ENCODE measurements at regions of chr4 and their contacts with region 1.

Region 1: GRCh38 chr4:25312496-25313200 is at the start of gene ZCCHC4:
- DNase-seq: peak; percentile 89
- ATAC-seq: peak; percentile 100
- H3K4me3 Mint-ChIP-seq: peak within 1 kb of the TSS; percentile 99
- H3K27ac Mint-ChIP-seq: peak within 1 kb of the TSS; percentile 94
- H3K4me1 Mint-ChIP-seq: peaks cover 28% of the 10 kb centered on the region
- H3K27me3 Mint-ChIP-seq: peaks cover 2% of the 10 kb centered on the region
- CTCF ChIP-seq: peak; percentile 93
- total RNA-seq, gene ZCCHC4: 12.0 to 12.8 TPM

Region 2: DNA sequence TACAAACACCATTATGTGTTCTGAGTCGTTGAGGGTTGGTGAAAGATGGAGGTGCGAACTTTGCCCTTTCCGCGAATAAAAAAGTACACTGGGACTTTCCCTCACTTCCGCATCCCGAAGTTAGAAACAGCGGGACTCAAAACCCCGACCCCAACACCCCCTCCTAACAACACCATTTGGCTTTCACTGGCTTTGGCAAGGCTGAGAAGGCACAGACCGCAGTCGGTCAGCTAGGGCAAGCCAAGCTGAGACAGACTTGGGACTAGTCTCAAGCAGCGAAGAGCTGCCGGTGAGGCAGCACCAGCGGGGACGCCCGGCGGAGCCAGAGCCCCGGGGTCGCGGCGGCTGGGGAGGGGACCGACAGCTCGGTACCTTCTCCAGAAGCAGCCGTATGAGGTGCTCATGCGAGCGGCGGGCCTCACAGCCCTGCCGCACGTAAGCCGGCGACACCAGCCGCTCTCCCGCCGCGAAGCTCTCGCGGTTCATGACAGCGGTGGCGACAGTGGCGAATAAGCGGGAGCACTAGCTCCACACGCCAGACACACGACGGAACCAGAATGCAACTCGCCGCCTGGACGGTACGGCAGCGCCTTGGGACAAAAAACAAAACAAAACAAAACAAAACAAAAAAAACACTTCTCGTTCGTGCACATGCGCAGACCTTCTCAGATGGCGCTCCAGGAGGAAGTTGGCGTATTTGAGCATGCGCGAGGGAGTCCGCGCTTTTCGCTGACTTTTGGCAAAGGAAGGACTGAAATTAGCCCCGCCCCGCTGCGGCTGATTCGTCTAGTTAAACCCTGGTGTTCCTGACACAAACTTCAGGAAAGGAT is 152.5 kb before region 1 on chr4 and contains the start of gene SEPSECS:
- CTCF ChIA-PET with region 1: interaction called, 20 read pairs
- POLR2A ChIA-PET with region 1: interaction called, 4 read pairs
- intact Hi-C with region 1: no loop called
- DNase-seq: peak; percentile 96
- ATAC-seq: peak; percentile 88
- H3K4me3 Mint-ChIP-seq: peak within 1 kb of the TSS; percentile 81
- H3K27ac Mint-ChIP-seq: peak within 1 kb of the TSS; percentile 88
- H3K4me1 Mint-ChIP-seq: peaks cover 39% of the 10 kb centered on the region
- H3K27me3 Mint-ChIP-seq: no peaks in the 10 kb centered on the region
- CTCF ChIP-seq: no peak
- total RNA-seq, gene SEPSECS: 13.9 to 15.2 TPM

Region 3: GRCh38 chr4:25234390-25235370 is 78.0 kb before region 1 on chr4:
- CTCF ChIA-PET with region 1: interaction called, 56 read pairs
- POLR2A ChIA-PET with region 1: interaction called, 15 read pairs
- intact Hi-C with region 1: loop called (anchors 10 kb)
- DNase-seq: peak; percentile 60
- ATAC-seq: peak; percentile 59
- H3K4me3 Mint-ChIP-seq: peak overlapping the region; percentile 94
- H3K27ac Mint-ChIP-seq: peak overlapping the region; percentile 94
- H3K4me1 Mint-ChIP-seq: peaks cover 47% of the 10 kb centered on the region
- H3K27me3 Mint-ChIP-seq: no peaks in the 10 kb centered on the region
- CTCF ChIP-seq: peak; percentile 66

Region 4: DNA sequence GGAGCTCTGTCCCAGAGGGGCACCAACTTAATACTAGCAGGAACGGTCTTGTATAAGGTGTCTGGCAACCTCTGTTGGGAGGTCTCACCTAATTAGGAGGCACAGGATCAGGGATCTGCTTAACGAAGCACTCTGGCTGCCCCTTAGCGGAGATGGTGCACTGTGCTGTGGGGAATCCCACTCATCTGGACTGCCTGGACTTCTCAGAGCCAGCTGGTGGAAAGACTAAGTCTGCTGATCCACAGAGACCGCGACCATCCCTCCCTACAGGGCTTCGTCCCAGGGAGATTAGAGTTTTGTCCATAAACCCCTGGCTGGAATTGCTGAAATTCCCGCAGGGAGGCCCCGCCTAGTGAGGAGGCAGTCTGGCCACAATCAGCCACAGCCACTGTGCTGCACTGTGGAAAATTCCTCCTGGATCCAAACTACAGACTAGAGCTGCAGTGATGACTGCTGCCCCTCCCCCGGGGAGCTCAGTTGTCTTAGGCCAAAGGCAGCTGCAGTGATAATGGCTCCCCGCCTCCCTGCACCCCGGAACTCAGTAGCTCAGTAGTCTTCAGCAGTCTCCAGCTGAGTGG is 22.1 kb before region 1 on chr4:
- CTCF ChIA-PET with region 1: interaction called, 14 read pairs
- POLR2A ChIA-PET with region 1: interaction called, 3 read pairs
- intact Hi-C with region 1: no loop called
- DNase-seq: no peak
- ATAC-seq: no peak
- H3K4me3 Mint-ChIP-seq: no peak overlapping the region
- H3K27ac Mint-ChIP-seq: no peak overlapping the region
- H3K4me1 Mint-ChIP-seq: no peaks in the 10 kb centered on the region
- H3K27me3 Mint-ChIP-seq: peaks cover 6% of the 10 kb centered on the region
- CTCF ChIP-seq: no peak

Region 5: GRCh38 chr4:25330905-25331808 is 18.5 kb after region 1 on chr4:
- CTCF ChIA-PET with region 1: interaction called, 25 read pairs
- POLR2A ChIA-PET with region 1: interaction called, 6 read pairs
- intact Hi-C with region 1: no loop called
- DNase-seq: no peak
- ATAC-seq: peak; percentile 79
- H3K4me3 Mint-ChIP-seq: peak overlapping the region; percentile 59
- H3K27ac Mint-ChIP-seq: peak overlapping the region; percentile 84
- H3K4me1 Mint-ChIP-seq: peaks cover 16% of the 10 kb centered on the region
- H3K27me3 Mint-ChIP-seq: no peaks in the 10 kb centered on the region
- CTCF ChIP-seq: no peak

Region 6: DNA sequence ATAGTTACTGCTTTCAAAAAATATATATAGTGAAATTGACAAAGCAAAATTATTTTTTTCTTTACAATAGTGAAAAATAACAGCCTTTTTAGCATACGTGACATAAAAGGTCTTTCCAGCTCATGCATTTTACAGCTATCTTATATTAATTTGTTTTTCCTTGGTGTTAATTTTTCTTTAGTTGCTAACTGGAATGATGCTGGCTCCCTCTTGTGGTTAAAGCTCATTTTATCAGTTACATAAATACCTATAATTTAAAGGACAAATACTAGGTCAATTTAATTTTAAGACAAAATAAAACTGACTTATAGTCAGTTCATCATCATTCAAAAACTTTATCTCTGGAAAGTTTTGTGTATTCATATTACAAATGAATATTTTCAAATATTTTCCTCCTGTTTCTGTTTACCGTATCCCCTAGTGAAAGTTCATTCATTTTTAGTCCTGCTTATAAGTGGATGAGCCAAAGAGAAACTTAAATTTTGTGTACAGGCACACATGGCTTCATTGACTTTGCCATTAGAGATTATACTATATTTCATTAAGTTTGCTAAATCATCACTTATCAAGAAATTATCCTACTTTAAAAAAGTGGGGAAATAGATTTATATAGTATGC is 54.5 kb after region 1 on chr4:
- CTCF ChIA-PET with region 1: interaction called, 58 read pairs
- POLR2A ChIA-PET with region 1: interaction called, 3 read pairs
- intact Hi-C with region 1: no loop called
- DNase-seq: no peak
- ATAC-seq: no peak
- H3K4me3 Mint-ChIP-seq: no peak overlapping the region
- H3K27ac Mint-ChIP-seq: no peak overlapping the region
- H3K4me1 Mint-ChIP-seq: no peaks in the 10 kb centered on the region
- H3K27me3 Mint-ChIP-seq: no peaks in the 10 kb centered on the region
- CTCF ChIP-seq: peak; percentile 86